GM10248 (cell line): ENCODE measurements at regions of chr17 and their contacts with region 1.

Region 1: GRCh38 chr17:64778240-64779097 is 116.4 kb upstream of the SMURF2 start:
- DNase-seq: no peak
- CTCF ChIP-seq: no peak

Region 2: DNA sequence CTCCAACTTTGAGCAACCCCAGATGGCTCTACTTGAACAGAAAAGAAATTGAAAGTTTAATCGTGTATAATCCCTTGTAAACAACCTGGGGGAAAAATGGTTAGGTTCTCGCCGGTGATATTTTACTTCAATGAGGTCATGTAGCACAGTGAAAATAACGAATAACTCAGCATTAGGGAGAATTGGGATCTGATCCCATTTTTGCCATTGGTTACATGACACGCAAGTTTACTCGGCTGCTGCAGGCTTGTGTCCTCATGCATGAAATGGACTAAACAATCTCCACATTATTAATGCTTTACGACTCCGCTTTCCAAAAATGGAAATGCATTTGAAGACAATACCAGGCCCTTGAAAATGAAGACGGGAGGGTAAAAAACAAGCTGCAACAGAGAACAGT is 186.3 kb after region 1 on chr17:
- CTCF ChIA-PET with region 1: interaction called, 14 read pairs
- POLR2A ChIA-PET with region 1: no interaction called
- DNase-seq: no peak
- CTCF ChIP-seq: no peak